Heart left ventricle (tissue), 16 donors: ENCODE measurements at regions of chr19 and their contacts with region 1.

Region 1: GRCh38 chr19:49766007-49766937 is 529 bp upstream of the AP2A1 start:
- DNase-seq: peak; percentile 99 to 100 (median 100)
- ATAC-seq: peak; percentile 90 to 96 (median 95)
- H3K4me3 ChIP-seq: peak overlapping the region in 11 of 12 donors; percentile 46 to 97 (median 84)
- H3K27ac ChIP-seq: peak overlapping the region; percentile 90 to 99 (median 94)
- H3K4me1 ChIP-seq: peaks cover 0 to 39% (median 29%) of the 10 kb centered on the region in 12 donors
- H3K27me3 ChIP-seq: no peaks in the 10 kb centered on the region
- CTCF ChIP-seq: peak in 2 of 12 donors; percentile 14 to 18
- POLR2A ChIP-seq: peak in 1 of 2 donors; percentile 92

Region 2: GRCh38 chr19:49712397-49712859 is 53.8 kb before region 1 on chr19:
- intact Hi-C with region 1: loop called in 3 of 10 experiments (anchors 1 to 5 kb)
- DNase-seq: peak in 4 of 5 donors; percentile 53 to 74 (median 66)
- ATAC-seq: peak in 3 of 4 donors; percentile 56 to 63 (median 57)
- H3K4me3 ChIP-seq: peak overlapping the region in 2 of 12 donors; percentile 10 to 23
- H3K27ac ChIP-seq: no peak overlapping the region
- H3K4me1 ChIP-seq: peaks cover 0 to 6% (median 0%) of the 10 kb centered on the region in 12 donors
- H3K27me3 ChIP-seq: no peaks in the 10 kb centered on the region
- CTCF ChIP-seq: no peak
- POLR2A ChIP-seq: peak in 1 of 2 donors; percentile 20

Region 3: DNA sequence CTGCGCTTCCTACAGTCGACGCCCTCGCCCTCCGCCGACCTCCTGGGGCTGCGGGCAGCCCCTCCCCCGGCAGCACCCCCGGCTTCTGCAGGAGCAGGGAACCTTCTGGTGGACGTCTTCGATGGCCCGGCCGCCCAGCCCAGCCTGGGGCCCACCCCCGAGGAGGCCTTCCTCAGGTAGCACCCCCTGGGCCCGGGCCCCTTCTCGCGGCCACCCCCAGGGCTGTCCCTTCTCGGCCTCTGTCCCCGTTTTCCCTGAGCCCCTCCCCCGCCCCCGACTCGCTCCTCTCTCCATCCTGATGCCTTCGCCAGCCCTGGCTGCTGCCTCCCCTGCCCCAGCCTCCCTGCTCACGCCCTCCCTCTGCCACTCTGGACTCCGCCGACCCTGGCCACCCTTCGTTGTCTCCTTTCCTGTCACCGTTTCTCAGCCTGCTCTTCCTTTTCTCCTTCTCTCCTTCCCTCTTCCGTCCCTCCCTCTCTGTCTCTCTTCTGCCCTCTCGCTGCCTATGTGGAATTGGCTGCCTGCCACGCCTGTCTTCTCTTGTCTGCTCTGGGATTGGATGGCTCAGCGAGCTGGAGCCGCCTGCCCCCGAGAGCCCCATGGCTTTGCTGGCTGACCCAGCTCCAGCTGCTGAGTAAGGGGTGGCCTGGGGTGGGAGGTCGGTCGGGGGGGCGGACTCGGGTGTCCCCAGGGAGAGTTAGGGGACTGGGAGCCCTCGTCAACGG is 35.9 kb after region 1 on chr19:
- intact Hi-C with region 1: loop called in 5 of 10 experiments (anchors 5 kb)
- DNase-seq: peak; percentile 91 to 96 (median 94)
- ATAC-seq: peak; percentile 80 to 91 (median 85)
- H3K4me3 ChIP-seq: peak overlapping the region in 10 of 12 donors; percentile 28 to 61 (median 42)
- H3K27ac ChIP-seq: peak overlapping the region in 9 of 12 donors; percentile 32 to 74 (median 55)
- H3K4me1 ChIP-seq: peaks cover 0 to 14% (median 1%) of the 10 kb centered on the region in 12 donors
- H3K27me3 ChIP-seq: no peaks in the 10 kb centered on the region
- CTCF ChIP-seq: peak in 9 of 12 donors; percentile 12 to 51 (median 27)
- POLR2A ChIP-seq: no peak

Region 4: GRCh38 chr19:49817964-49818648 is 51.8 kb after region 1 on chr19 and contains the start of gene MED25:
- intact Hi-C with region 1: loop called in 2 of 10 experiments (anchors 2 to 5 kb)
- DNase-seq: peak; percentile 85 to 92 (median 89)
- ATAC-seq: peak; percentile 52 to 80 (median 75)
- H3K4me3 ChIP-seq: peak within 1 kb of the TSS; percentile 45 to 93 (median 80)
- H3K27ac ChIP-seq: peak within 1 kb of the TSS; percentile 87 to 100 (median 97)
- H3K4me1 ChIP-seq: peaks cover 0 to 40% (median 28%) of the 10 kb centered on the region in 12 donors
- H3K27me3 ChIP-seq: no peaks in the 10 kb centered on the region
- CTCF ChIP-seq: peak in 7 of 12 donors; percentile 10 to 49 (median 28)
- POLR2A ChIP-seq: peak; percentile 40 to 81
- total RNA-seq, gene MED25: 45.8 to 119 (median 54.7) TPM

Region 5: DNA sequence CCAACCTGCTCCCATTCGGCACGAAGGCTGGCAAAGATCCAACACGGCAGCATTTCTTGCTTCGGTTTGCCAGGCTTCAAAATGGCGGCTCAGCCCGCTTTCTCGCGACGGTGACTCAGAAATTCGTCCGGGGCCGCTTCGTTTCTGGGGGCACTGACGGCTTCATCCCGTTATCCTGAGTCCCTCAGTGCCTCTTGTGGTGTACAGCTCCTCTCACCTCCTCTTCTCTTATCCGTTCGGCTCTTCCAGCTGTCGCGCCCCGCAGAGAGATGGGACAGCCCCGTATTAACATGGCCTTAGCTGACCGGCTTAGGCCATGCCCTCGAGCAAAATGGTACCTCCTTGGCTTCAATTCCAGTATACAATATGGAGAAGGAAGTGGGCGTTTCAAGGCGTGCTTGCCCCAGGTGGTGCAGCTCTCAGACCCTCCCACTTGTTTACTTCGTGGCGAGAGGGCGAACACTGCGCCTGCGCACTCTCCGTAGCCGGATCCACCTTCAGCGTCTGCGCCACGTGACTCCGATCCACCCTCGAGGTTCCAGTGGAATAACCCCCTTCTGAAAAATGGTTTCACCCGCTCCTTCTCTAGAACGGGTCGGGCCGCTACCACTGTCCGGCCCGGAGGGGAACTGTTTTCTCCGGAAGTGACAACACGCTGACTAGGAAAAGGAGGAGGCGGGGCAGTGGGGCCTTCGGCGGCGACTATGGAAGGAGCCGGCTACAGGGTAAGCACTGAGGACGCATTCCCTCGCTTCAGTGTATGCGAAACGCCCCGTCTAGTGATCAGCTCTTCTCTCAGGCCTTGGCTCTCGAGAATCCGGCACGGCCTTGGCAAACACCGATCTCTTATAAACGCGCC is 111.0 kb after region 1 on chr19 and contains the starts of genes AKT1S1 and TBC1D17:
- intact Hi-C with region 1: loop called in 3 of 10 experiments (anchors 2 to 5 kb)
- DNase-seq: peak; percentile 99 to 100 (median 99)
- ATAC-seq: peak; percentile 84 to 90 (median 87)
- H3K4me3 ChIP-seq: peak within 1 kb of the TSS; percentile 72 to 99 (median 87)
- H3K27ac ChIP-seq: peak within 1 kb of the TSS; percentile 96 to 100 (median 98)
- H3K4me1 ChIP-seq: peaks cover 0 to 30% (median 19%) of the 10 kb centered on the region in 12 donors
- H3K27me3 ChIP-seq: no peaks in the 10 kb centered on the region
- CTCF ChIP-seq: no peak
- POLR2A ChIP-seq: peak; percentile 58 to 70
- total RNA-seq, gene AKT1S1: 25.3 to 46.0 (median 31.2) TPM
- total RNA-seq, gene TBC1D17: 30.1 to 54.8 (median 39.8) TPM